ENCODE measurements at regions of chr12 and their contacts with region 1.

Region 1: GRCh38 chr12:67592216-67593011 is 56.1 kb upstream of the DYRK2 start:
- DNase-seq: peak; percentile 20
- H3K4me3 Mint-ChIP-seq: peak overlapping the region; percentile 41
- H3K27ac Mint-ChIP-seq: peak overlapping the region; percentile 90
- H3K4me1 Mint-ChIP-seq: peaks cover 58% of the 10 kb centered on the region
- H3K27me3 Mint-ChIP-seq: no peaks in the 10 kb centered on the region

Region 2: DNA sequence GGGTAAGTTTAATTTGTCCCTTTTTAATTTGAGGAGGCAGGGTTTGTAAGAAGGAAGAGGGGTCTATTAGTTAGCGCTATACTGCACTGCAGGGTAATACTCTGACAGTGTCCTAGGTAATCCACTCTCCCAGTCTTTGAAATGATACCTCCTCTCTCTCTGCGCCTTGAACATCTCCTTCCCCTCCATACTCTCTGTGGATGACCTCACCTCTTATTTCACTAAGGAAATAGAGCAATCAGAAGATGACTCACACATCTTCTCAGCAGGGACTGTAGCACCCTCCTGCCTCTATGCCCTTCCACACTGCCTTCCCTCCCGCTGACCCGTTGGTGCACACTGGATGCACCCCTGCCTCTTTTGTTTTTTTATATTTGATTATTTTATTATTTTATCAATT is 1007.7 kb before region 1 on chr12:
- intact Hi-C with region 1: no loop called
- DNase-seq: no peak
- H3K4me3 Mint-ChIP-seq: no peak overlapping the region
- H3K27ac Mint-ChIP-seq: no peak overlapping the region
- H3K4me1 Mint-ChIP-seq: no peaks in the 10 kb centered on the region
- H3K27me3 Mint-ChIP-seq: no peaks in the 10 kb centered on the region

Region 3: DNA sequence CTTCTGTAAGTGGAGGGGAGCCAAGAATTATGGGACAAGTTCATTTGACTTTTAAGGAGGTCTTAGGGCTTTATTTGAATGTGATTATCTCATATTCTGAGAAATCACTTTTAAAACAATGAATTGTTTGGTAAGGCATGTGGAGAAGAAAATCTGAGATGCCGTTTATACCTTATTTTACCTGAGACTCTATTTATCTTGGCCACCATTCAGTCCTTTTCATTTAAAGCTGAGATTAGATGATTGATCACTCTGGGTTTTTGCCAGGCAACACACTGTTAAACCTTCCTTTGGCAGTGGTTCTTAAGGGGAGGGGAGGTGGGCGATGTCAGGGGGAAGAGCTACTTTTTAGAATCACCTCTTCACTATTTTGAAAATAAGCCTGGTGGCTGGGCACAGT is 311.8 kb before region 1 on chr12:
- intact Hi-C with region 1: no loop called
- DNase-seq: no peak
- H3K4me3 Mint-ChIP-seq: no peak overlapping the region
- H3K27ac Mint-ChIP-seq: no peak overlapping the region
- H3K4me1 Mint-ChIP-seq: peaks cover 48% of the 10 kb centered on the region
- H3K27me3 Mint-ChIP-seq: no peaks in the 10 kb centered on the region

Region 4: DNA sequence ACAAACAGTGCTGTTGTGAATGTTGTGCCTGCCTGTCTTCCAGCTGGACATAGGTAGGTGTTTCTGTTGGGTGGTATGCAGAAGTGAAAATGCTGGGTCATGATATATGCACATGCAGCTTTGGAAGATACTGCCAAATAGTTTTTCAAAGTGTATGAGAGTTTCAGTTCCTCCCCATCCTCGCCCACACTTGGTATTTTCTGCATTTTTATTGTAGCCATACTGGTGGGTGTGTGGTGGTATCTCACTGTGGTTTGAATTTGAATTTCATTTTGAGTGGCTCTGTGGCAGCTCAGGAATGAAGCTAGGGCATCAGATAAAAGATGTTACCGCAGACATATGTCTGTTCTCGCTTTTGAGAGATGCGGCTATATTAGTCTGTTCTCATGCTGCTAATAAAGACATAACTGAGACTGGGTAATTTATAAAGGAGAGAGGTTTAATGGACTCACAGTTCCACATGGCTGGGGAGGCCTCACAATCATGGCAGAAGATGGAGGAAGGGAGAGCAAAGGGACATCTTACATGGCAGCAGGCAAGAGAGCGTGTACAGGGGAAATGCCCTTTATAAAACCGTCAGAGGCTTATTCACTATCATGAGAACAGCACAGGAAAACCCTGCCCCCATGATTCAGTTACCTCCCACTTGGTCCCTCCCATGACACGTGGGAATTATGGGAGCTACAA is 140.2 kb before region 1 on chr12:
- intact Hi-C with region 1: loop called (anchors 2 kb)
- DNase-seq: no peak
- H3K4me3 Mint-ChIP-seq: peak overlapping the region; percentile 12
- H3K27ac Mint-ChIP-seq: peak overlapping the region; percentile 82
- H3K4me1 Mint-ChIP-seq: peaks cover 47% of the 10 kb centered on the region
- H3K27me3 Mint-ChIP-seq: peaks cover 20% of the 10 kb centered on the region

Region 5: GRCh38 chr12:67578976-67579661 is 13.3 kb before region 1 on chr12:
- intact Hi-C with region 1: loop called (anchors 1 kb)
- DNase-seq: peak; percentile 11
- H3K4me3 Mint-ChIP-seq: peak overlapping the region; percentile 30
- H3K27ac Mint-ChIP-seq: peak overlapping the region; percentile 56
- H3K4me1 Mint-ChIP-seq: peaks cover 30% of the 10 kb centered on the region
- H3K27me3 Mint-ChIP-seq: peaks cover 12% of the 10 kb centered on the region